ENCODE measurements at regions of chr19 and their contacts with region 1.

Region 1: GRCh38 chr19:17775245-17775916 is 19.6 kb upstream of the B3GNT3 start:
- DNase-seq: no peak
- ATAC-seq: no peak
- H3K4me3 ChIP-seq: no peak overlapping the region
- H3K27ac ChIP-seq: no peak overlapping the region
- H3K4me1 ChIP-seq: peaks cover 0 to 10% (median 5%) of the 10 kb centered on the region in 9 donors
- H3K27me3 ChIP-seq: peaks cover 9 to 61% (median 39%) of the 10 kb centered on the region in 7 donors
- CTCF ChIP-seq: peak in 7 of 9 donors; percentile 29 to 56 (median 44)

Region 2: DNA sequence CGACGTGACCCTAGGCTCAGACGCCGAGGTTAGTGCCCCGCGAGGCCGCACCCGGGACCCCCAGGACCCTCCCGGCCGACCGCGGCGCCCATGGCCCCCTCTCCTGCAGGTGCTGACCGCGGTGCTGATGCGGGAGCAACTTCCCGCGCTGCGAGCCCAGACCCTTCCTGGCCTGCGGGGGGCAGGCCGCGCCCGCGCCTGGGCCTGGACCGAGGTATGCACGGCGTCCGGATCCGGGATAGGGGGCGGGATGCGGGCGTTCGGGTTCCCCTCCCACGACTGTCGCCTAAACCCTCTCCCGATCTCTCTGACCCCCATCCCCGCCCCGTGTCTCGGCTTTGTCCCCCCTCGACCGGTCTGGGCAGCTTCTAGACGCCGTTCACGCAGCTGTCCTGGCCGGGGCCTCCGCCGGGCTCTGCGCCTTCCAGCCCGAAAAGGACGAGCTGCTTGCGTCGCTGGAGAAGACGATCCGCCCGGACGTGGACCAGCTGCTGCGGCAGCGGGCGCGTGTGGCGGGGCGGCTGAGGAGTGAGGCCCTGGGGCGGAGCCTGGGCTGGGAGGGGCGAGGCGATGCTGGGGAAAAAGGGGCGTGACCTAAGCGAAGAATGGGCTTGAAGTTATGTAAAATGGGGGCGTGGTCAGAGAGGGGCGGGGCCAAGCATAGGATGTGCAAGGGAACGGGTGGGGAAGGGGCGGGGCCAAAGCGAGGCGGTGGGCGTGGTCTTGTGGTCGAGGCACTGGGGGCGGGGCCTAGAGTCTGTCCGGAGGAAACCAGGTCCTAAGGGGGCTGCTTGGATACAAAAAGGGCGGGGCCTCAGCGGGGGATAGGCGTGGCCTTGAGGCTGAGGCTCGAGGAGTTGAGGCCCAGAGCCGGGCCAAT is 235.9 kb before region 1 on chr19:
- intact Hi-C with region 1: loop called in 1 of 10 experiments (anchors 10 kb)
- DNase-seq: peak; percentile 95 to 96
- ATAC-seq: peak; percentile 90 to 95 (median 92)
- H3K4me3 ChIP-seq: peak overlapping the region; percentile 25 to 65 (median 57)
- H3K27ac ChIP-seq: peak overlapping the region in 8 of 10 donors; percentile 22 to 69 (median 62)
- H3K4me1 ChIP-seq: peaks cover 7 to 14% (median 10%) of the 10 kb centered on the region in 9 donors
- H3K27me3 ChIP-seq: peaks cover 0 to 10% (median 0%) of the 10 kb centered on the region in 7 donors
- CTCF ChIP-seq: peak in 7 of 9 donors; percentile 35 to 75 (median 60)

Region 3: DNA sequence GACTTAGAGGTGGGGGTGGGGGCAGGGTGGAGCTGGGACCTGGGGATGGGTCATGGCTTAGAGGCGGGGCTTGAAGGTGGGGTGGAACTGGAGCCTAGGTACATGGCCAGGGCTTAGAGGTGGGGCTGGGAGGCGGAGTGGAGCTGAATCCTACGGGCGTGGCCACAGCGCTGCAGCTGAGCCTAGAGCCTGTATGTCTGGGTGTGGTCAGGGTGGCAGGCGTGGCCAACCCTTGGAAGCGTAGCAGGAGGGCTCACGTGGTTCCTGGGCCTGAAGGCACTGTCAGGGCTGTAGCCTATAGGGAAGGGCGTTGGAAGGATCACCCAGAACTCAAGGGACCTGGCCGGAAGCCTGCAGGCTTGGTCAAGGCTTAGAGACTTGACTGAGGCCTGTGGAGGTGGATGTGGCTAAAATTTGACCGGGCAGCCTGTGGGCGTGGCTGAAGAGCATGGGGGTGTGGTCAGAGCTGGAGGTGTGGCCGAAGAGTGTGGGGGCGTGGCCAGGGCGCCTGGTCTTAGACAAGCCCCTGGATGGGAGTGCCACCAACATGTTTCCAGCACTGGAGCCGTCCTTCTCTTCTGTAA is 195.6 kb before region 1 on chr19:
- intact Hi-C with region 1: loop called in 1 of 10 experiments (anchors 10 kb)
- DNase-seq: peak; percentile 35 to 55
- ATAC-seq: peak; percentile 54 to 81 (median 68)
- H3K4me3 ChIP-seq: no peak overlapping the region
- H3K27ac ChIP-seq: no peak overlapping the region
- H3K4me1 ChIP-seq: peaks cover 0 to 3% (median 0%) of the 10 kb centered on the region in 9 donors
- H3K27me3 ChIP-seq: no peaks in the 10 kb centered on the region
- CTCF ChIP-seq: no peak

Region 4: DNA sequence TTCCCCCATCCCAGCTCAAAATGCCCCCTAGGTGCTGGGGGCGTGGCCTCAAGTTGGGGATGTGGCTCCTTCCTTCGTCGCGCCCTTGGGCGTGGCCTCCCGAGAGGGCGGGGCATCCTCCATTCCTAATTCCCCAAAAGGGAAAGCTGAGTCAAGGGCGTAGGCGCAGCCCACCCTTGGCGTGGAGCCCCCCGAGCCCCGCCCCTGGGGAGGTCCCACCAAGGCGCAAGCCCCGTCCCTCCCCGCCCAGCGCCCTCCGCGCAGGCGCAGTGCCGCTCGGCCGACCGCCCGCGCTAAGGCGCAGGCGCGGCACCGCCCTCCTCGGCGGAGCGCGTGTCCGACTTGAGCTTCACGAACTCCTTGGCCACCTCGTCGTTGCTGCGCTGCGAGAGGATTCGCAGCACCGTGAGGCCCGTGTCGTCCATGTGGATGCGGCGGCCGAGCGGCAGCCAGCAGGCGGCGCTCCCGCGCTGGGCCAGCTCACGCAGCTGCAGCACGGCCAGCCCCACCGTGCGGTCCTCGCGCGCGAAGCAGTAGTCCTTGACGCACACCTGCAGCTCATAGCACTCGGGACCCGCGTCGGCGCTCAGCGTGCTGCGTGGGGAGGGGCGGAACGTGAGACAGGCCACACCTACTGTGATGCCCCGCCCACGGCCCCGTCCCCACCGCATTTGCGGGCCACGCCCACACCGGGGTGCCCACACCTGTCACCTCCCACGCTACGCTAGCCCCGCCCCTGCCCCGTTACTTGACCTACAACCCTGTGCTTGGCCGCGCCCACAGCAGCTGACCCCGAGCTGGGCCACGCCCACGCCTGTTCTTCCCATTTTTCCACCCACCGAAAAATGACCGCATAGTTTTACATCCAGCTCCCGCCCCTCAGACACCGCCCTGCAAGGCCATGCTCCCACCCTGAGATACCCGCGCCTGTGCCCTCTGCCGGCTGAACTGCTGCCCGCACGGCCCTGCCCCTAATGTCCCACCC is 169.3 kb before region 1 on chr19:
- intact Hi-C with region 1: loop called in 1 of 10 experiments (anchors 10 kb)
- DNase-seq: peak; percentile 44 to 67
- ATAC-seq: peak; percentile 65 to 91 (median 76)
- H3K4me3 ChIP-seq: peak overlapping the region in 9 of 10 donors; percentile 23 to 57 (median 44)
- H3K27ac ChIP-seq: peak overlapping the region in 5 of 10 donors; percentile 0 to 68 (median 26)
- H3K4me1 ChIP-seq: peaks cover 5 to 15% (median 10%) of the 10 kb centered on the region in 9 donors
- H3K27me3 ChIP-seq: peaks cover 0 to 47% (median 26%) of the 10 kb centered on the region in 7 donors
- CTCF ChIP-seq: peak; percentile 18 to 74 (median 58)

Region 5: GRCh38 chr19:17718947-17719711 is 56.3 kb before region 1 on chr19 and contains the start of gene MAP1S:
- intact Hi-C with region 1: loop called in 1 of 10 experiments (anchors 5 kb)
- DNase-seq: peak; percentile 51 to 72
- ATAC-seq: peak in 7 of 8 donors; percentile 54 to 64 (median 61)
- H3K4me3 ChIP-seq: peak within 1 kb of the TSS; percentile 83 to 98 (median 94)
- H3K27ac ChIP-seq: peak within 1 kb of the TSS; percentile 31 to 92 (median 72)
- H3K4me1 ChIP-seq: peaks cover 14 to 60% (median 57%) of the 10 kb centered on the region in 9 donors
- H3K27me3 ChIP-seq: no peaks in the 10 kb centered on the region
- CTCF ChIP-seq: no peak
- total RNA-seq, gene MAP1S: 20.7 to 48.7 (median 27.1) TPM

Region 6: DNA sequence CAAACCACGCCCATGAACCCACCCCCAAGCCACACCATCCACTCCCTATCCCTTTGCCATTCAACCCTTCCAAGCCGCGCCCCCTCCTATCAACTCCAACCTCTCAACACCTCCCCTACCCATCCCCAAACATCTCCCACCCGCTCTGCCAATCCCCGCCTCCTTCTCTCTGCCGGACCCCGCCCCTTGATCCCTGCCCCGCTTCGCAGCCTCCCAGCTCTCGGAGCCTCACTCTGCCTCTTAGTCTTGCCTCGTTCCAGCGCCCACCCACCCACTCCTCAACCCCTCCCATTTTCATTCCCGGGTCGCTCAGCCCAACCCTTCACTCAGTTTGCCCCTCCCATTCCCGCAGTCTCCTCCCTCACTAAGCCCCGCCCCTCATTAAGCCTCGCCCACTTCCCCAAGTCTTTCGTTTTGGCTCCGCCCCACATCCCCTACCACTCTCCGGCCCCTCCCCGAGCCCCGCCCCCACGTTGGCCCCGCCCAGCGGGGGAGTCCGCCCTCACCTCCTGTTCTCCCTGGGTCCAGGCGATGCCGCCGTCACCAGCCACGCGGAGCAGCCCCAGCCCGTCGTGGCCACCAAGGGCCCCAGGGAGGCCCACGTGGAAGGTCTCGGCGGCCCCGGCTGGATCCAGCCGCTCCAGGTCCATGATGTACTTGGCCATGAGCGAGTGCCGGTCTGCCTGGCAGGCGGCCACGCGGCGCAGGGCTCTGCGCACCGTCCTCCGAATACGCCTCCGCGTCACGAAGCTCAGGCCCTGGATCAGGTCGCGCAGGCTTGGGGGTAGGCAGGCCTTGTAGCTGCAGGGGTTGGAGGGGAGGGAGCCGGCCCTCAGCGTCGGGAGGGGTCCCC is 66.7 kb after region 1 on chr19:
- intact Hi-C with region 1: no loop called
- DNase-seq: peak; percentile 76 to 82
- ATAC-seq: peak; percentile 72 to 89 (median 84)
- H3K4me3 ChIP-seq: peak overlapping the region in 8 of 10 donors; percentile 1 to 44 (median 32)
- H3K27ac ChIP-seq: peak overlapping the region in 2 of 10 donors; percentile 5 to 10
- H3K4me1 ChIP-seq: peaks cover 0 to 50% (median 7%) of the 10 kb centered on the region in 9 donors
- H3K27me3 ChIP-seq: peaks cover 0 to 81% (median 18%) of the 10 kb centered on the region in 7 donors
- CTCF ChIP-seq: no peak

Measured in heart right ventricle (tissue), 16 donors.